GM12878 (cell line): ENCODE measurements at regions of chr6 and their contacts with region 1.

Region 1: DNA sequence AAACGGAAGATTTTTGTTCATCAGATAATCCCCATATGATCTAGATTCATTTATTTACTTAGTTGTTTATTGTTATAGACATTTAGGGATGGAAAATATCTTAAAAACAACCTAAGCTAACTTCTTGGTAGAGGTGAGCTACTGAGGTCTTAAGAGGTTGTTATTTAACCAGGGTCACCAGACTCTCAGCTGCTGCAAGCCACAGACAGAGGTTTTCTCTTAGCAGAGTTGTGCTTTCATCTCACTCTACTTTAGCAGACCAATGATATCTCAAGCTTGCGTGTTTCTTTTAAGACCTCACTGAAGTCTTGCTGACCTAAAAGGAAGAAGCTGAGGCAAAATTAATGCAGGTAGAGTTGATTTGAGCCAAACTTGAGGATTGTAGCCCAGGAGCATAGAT is 43.6 kb downstream of the NCOA7 start:
- DNase-seq: peak; percentile 36
- ATAC-seq: peak; percentile 82
- H3K4me3 ChIP-seq: no peak overlapping the region
- H3K27ac ChIP-seq: no peak overlapping the region
- H3K4me1 ChIP-seq: peaks cover 18% of the 10 kb centered on the region
- H3K27me3 ChIP-seq: no peaks in the 10 kb centered on the region
- CTCF ChIP-seq: no peak
- EP300 ChIP-seq: 0 out of 4 replicates have a peak, but pooled peaks of 1 of the 2 experiments have one; percentile 18
- POLR2A ChIP-seq: no peak
- RAD21 ChIP-seq: no peak

Region 2: GRCh38 chr6:125700581-125701353 is 133.6 kb before region 1 on chr6:
- CTCF ChIA-PET with region 1: no interaction called
- POLR2A ChIA-PET with region 1: no interaction called
- RAD21 ChIA-PET with region 1: no interaction called
- SMC1A ChIA-PET with region 1: no interaction called
- in situ Hi-C with region 1: no loop called
- intact Hi-C with region 1: no loop called
- DNase-seq: no peak
- ATAC-seq: no peak
- H3K4me3 ChIP-seq: no peak overlapping the region
- H3K27ac ChIP-seq: no peak overlapping the region
- H3K4me1 ChIP-seq: no peaks in the 10 kb centered on the region
- H3K27me3 ChIP-seq: 0 out of 4 replicates have a peak, but pooled peaks cover 0 to 1% of the 10 kb centered on the region in 2 experiments
- CTCF ChIP-seq: no peak
- EP300 ChIP-seq: no peak
- POLR2A ChIP-seq: no peak
- RAD21 ChIP-seq: no peak

Region 3: DNA sequence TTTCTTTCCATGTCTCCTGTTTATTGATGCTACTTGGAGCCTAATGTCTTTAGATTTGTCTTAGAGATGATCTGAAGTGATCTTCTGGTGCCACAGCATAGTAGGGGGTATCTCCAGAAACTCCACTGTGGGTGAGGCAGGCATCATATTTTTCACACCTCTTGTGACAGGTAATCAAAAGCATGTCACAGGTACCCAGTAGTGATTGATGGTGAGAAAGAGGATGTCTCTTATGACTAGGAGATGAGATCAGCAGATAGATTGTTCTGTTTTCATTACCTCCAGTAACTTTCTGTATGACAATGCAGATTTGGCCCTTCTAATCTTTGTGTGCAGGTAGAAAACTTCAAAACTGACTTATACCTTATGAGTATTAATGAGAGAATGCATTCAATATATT is 30.1 kb before region 1 on chr6:
- CTCF ChIA-PET with region 1: interaction called, 13 read pairs
- POLR2A ChIA-PET with region 1: interaction called, 7 read pairs
- RAD21 ChIA-PET with region 1: interaction called, 135 read pairs
- SMC1A ChIA-PET with region 1: interaction called, 161 read pairs
- in situ Hi-C with region 1: no loop called
- intact Hi-C with region 1: no loop called
- DNase-seq: peak; percentile 61
- ATAC-seq: peak; percentile 72
- H3K4me3 ChIP-seq: no peak overlapping the region
- H3K27ac ChIP-seq: peak overlapping the region; percentile 49
- H3K4me1 ChIP-seq: peaks cover 69% of the 10 kb centered on the region
- H3K27me3 ChIP-seq: no peaks in the 10 kb centered on the region
- CTCF ChIP-seq: no peak
- EP300 ChIP-seq: peak; percentile 83 to 98; a peak in 3 of 4 replicates
- POLR2A ChIP-seq: no peak
- RAD21 ChIP-seq: no peak

Region 4: GRCh38 chr6:125818225-125818657 is 16.1 kb before region 1 on chr6:
- CTCF ChIA-PET with region 1: interaction called, 6 read pairs
- POLR2A ChIA-PET with region 1: interaction called, 6 read pairs
- RAD21 ChIA-PET with region 1: interaction called, 12 read pairs
- SMC1A ChIA-PET with region 1: interaction called, 33 read pairs
- in situ Hi-C with region 1: no loop called
- intact Hi-C with region 1: no loop called
- DNase-seq: no peak
- ATAC-seq: peak; percentile 30
- H3K4me3 ChIP-seq: peak overlapping the region; percentile 57
- H3K27ac ChIP-seq: peak overlapping the region; percentile 63
- H3K4me1 ChIP-seq: peaks cover 27% of the 10 kb centered on the region
- H3K27me3 ChIP-seq: no peaks in the 10 kb centered on the region
- CTCF ChIP-seq: no peak
- EP300 ChIP-seq: no peak
- POLR2A ChIP-seq: no peak
- RAD21 ChIP-seq: no peak

Region 5: DNA sequence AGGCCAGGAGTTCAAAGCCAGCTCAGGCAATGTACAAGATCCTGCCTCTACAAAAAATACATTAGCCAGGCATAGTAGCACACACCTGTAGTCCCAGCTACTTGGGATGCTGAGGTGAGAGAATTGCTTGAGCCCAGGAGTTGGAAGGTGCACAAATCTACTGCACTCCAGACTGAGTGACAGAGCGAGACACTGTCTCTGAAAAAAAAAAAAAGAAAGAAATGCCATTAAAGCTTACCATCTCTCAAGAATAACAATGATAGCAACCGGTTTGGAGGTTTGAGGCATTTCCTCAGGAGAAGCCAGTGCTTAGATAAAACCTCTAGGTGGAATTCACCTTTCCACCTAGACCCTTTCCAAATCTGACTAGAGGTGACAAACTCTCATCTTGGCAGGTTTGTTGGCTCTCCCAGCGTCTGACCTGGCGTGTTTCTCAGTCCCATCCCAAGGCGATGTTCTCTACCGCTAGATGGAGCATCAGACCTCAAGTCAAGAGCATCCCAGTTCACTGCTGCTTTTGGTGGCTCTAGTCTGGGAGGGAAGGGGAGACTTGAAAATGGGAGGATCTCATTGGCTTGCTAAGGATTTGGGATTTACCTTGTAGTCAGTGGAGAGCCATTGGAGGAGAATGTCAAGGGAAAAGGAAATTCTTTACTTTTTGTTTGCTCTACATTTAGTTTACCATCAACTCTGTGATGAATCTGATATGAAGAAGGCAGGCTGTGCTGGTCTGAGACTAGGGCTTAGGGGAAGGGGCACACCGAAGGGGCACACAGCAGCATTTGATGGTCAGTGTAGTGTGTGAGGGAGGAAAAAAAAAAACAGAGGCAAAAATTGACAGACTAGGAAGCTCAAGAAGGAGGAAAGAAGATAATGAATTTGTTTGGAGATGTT is 24.3 kb after region 1 on chr6:
- CTCF ChIA-PET with region 1: interaction called, 12 read pairs
- POLR2A ChIA-PET with region 1: no interaction called
- RAD21 ChIA-PET with region 1: no interaction called
- SMC1A ChIA-PET with region 1: interaction called, 4 read pairs
- in situ Hi-C with region 1: no loop called
- intact Hi-C with region 1: no loop called
- DNase-seq: no peak
- ATAC-seq: peak; percentile 91
- H3K4me3 ChIP-seq: no peak overlapping the region
- H3K27ac ChIP-seq: no peak overlapping the region
- H3K4me1 ChIP-seq: no peaks in the 10 kb centered on the region
- H3K27me3 ChIP-seq: no peaks in the 10 kb centered on the region
- CTCF ChIP-seq: peak; percentile 60 to 64 (median 62); a peak in 5 of 6 replicates
- EP300 ChIP-seq: no peak
- POLR2A ChIP-seq: no peak
- RAD21 ChIP-seq: peak; percentile 63